ENCODE measurements at regions of chr1 and their contacts with region 1.

Region 1: DNA sequence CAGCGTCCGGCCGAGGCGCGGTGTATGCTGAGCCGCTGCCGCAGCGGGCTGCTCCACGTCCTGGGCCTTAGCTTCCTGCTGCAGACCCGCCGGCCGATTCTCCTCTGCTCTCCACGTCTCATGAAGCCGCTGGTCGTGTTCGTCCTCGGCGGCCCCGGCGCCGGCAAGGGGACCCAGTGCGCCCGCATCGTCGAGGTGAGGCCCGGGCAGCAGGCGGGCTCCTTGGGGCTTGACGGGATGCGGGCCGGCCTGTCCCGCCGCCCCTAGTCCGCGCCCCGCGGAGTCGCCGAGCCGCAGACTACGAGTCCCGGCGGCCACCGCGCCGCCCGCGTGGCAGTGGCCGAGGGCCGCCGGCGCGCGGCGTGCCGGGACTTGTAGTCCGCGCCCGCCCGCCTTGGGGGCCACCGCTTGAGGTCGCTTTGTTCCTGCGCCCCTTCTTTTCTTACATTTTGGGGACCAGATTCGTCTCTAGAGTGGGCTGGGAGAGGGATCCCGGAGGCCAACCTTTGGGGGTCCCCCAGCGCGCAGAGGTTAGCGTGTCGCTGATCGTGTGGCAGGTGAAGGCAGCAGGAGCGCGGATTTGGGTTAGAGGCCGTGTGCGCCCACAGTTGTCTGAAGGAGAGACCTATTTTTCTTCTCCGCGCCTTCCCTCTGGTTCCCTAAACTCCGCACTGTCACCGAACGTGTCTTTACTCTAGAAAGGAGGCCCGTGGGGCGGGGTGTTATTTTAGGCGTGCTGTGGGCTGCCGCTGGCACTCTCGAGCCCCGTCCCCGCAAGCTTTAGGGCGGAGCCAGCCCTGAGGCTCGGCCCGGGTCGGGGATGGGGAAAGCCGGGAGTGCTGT is 553 bp downstream of the CMPK1 start:
- DNase-seq: peak; percentile 58
- ATAC-seq: peak; percentile 92
- H3K4me3 ChIP-seq: peak overlapping the region; percentile 87 to 98 (median 94)
- H3K27ac ChIP-seq: peak overlapping the region; percentile 99
- H3K4me1 ChIP-seq: peaks cover 52% of the 10 kb centered on the region
- H3K27me3 ChIP-seq: no peaks in the 10 kb centered on the region; a peak in 1 of 5 replicates
- CTCF ChIP-seq: peak; percentile 20
- EP300 ChIP-seq: no peak
- POLR2A ChIP-seq: peak; percentile 82 to 83; a peak in 3 of 4 replicates
- RAD21 ChIP-seq: peak; percentile 31

Region 2: GRCh38 chr1:47067097-47067594 is 267.0 kb before region 1 on chr1 and contains the start of gene CYP4Z1:
- CTCF ChIA-PET with region 1: no interaction called
- POLR2A ChIA-PET with region 1: no interaction called
- in situ Hi-C with region 1: no loop called
- intact Hi-C with region 1: no loop called
- DNase-seq: no peak
- ATAC-seq: no peak
- H3K4me3 ChIP-seq: no peak within 1 kb of the TSS
- H3K27ac ChIP-seq: no peak within 1 kb of the TSS
- H3K4me1 ChIP-seq: no peaks in the 10 kb centered on the region
- H3K27me3 ChIP-seq: no peaks in the 10 kb centered on the region
- CTCF ChIP-seq: no peak
- EP300 ChIP-seq: no peak
- POLR2A ChIP-seq: no peak
- RAD21 ChIP-seq: no peak
- total RNA-seq, gene CYP4Z1: not detected in 2 replicates

Region 3: GRCh38 chr1:47313915-47314664 is 20.1 kb before region 1 on chr1 and contains the start of gene STIL:
- CTCF ChIA-PET with region 1: no interaction called
- POLR2A ChIA-PET with region 1: interaction called, 54 read pairs
- in situ Hi-C with region 1: no loop called
- intact Hi-C with region 1: loop called (anchors 1 kb)
- DNase-seq: peak; percentile 99
- ATAC-seq: peak; percentile 97
- H3K4me3 ChIP-seq: peak within 1 kb of the TSS; percentile 79 to 86 (median 81)
- H3K27ac ChIP-seq: peak within 1 kb of the TSS; percentile 89
- H3K4me1 ChIP-seq: peaks cover 33% of the 10 kb centered on the region
- H3K27me3 ChIP-seq: no peaks in the 10 kb centered on the region; a peak in 1 of 5 replicates
- CTCF ChIP-seq: peak; percentile 7; the same call in 1 of the 2 replicates
- EP300 ChIP-seq: no peak
- POLR2A ChIP-seq: peak; percentile 65 to 79
- RAD21 ChIP-seq: 0 out of 2 replicates have a peak, but pooled peaks have one; percentile 19
- total RNA-seq, gene STIL: 18.6 and 22.8 TPM in 2 replicates

Region 4: GRCh38 chr1:47378147-47378546 is 44.0 kb after region 1 on chr1:
- CTCF ChIA-PET with region 1: no interaction called
- POLR2A ChIA-PET with region 1: interaction called, 4 read pairs
- in situ Hi-C with region 1: no loop called
- intact Hi-C with region 1: loop called (anchors 1 kb)
- DNase-seq: peak; percentile 73
- ATAC-seq: peak; percentile 35; the same call in 2 of the 3 replicates
- H3K4me3 ChIP-seq: no peak overlapping the region
- H3K27ac ChIP-seq: peak overlapping the region; percentile 75
- H3K4me1 ChIP-seq: peaks cover 65% of the 10 kb centered on the region
- H3K27me3 ChIP-seq: no peaks in the 10 kb centered on the region
- CTCF ChIP-seq: no peak
- EP300 ChIP-seq: peak in 1 of 2 experiments; percentile 90; a peak in 1 of 4 replicates
- POLR2A ChIP-seq: no peak
- RAD21 ChIP-seq: no peak

Region 5: DNA sequence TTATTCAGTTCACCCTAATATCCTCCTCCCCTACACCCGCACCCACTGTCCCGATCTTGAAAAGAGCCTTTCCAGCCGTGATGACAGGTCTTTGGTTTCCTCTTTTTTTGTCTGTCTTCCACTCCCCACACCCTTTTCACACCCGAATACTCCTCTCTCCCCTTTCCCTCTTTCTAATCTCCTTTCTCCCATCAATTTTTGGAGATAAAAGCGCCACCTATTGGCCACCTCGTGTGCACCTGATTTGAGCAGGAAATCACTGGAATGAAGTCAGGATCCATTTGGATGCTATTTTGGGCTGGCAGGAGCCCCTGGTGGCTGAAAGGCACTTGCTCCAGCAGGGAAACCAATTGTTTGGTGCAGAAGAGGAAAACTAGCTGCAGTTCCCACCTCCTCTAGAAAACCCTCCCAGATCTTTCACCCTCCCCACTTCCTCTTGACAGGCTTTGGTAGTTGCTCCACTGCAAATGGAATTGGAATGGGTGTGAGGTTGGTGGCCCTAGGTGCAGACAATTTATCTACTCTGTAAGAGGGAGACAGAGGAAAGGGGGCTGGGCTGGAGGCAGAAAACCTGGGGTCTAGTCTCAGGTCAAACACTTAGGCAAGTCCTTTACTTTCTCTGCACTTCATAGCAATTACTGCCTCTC is 90.3 kb after region 1 on chr1:
- CTCF ChIA-PET with region 1: no interaction called
- POLR2A ChIA-PET with region 1: no interaction called
- in situ Hi-C with region 1: no loop called
- intact Hi-C with region 1: loop called (anchors 1 kb)
- DNase-seq: peak; percentile 52
- ATAC-seq: peak; percentile 86
- H3K4me3 ChIP-seq: no peak overlapping the region
- H3K27ac ChIP-seq: no peak overlapping the region
- H3K4me1 ChIP-seq: no peaks in the 10 kb centered on the region
- H3K27me3 ChIP-seq: no peaks in the 10 kb centered on the region; a peak in 1 of 5 replicates
- CTCF ChIP-seq: peak; percentile 78
- EP300 ChIP-seq: no peak
- POLR2A ChIP-seq: no peak
- RAD21 ChIP-seq: peak; percentile 41; the same call in 1 of the 2 replicates